Dorsolateral prefrontal cortex (tissue), 120 donors: ENCODE measurements at regions of chrX and their contacts with region 1.

Region 1: DNA sequence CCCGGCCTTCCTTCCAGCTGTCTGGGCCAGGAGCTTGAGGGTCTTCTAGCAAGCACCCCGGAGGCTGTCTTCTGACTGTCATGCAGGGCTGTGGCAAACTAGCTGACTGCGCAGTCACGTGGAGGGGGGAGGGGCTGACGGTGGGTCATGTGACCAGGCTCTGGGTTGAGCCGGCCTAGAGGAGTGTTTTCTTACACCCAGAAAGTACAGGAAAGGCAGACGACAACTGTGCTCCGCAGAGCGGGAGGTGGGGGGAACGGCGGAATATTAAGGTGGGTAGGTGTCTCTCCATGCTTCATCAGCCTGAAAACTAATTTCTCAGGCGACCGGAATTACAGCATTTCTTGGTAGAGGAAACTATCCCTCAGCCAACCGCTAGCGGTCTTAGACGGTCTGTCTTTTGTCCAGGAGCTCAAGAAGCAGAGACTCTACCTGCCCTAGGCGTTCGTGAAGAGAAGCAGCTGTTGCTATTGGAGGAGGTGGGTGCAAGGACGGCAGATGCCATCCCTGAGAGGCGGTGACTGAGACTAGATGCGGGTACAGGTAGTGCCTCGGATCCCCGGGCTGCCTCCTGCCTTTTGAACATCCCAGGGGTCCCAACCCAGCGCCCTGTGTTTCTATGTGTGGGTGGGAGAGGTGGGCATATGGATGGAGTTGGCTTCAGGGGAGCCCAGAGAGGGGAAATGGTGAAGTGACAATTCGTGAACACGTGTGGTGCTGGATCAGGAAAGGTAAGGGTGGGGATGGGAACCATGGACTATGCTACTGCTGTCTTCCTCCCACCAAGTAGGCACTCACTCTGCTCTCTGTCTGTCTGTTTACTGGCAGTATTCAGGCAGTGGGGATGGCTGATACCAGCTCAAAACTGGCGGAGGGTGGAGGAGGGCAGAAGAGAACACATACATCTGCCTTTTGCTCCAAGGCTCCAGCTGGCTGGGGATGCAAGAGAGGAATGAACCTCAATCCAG is 8.8 kb downstream of the GPRASP1 start:
- DNase-seq: peak; percentile 56 to 91 (median 86)
- H3K4me3 ChIP-seq: peak overlapping the region; percentile 22 to 74 (median 53)
- H3K27ac ChIP-seq: peak overlapping the region in 46 of 59 donors; percentile 2 to 85 (median 61)
- H3K27me3 ChIP-seq: peaks cover 0 to 33% (median 0%) of the 10 kb centered on the region in 45 donors
- CTCF ChIP-seq: peak in 12 of 56 donors; percentile 6 to 28 (median 19)

Region 2: GRCh38 chrX:102515975-102516941 is 143.8 kb before region 1 on chrX and contains the start of gene TMSB15A:
- intact Hi-C with region 1: loop called in 1 of 2 experiments (anchors 10 kb)
- DNase-seq: peak; percentile 46 to 67 (median 56)
- H3K4me3 ChIP-seq: peak within 1 kb of the TSS; percentile 32 to 71 (median 54)
- H3K27ac ChIP-seq: no peak within 1 kb of the TSS
- H3K27me3 ChIP-seq: peaks cover 0 to 92% (median 37%) of the 10 kb centered on the region in 45 donors
- CTCF ChIP-seq: no peak
- total RNA-seq, gene TMSB15A: 0.65 to 1.5 (median 0.84) TPM in 12 of 120 experiments, not detected in the others

Region 3: DNA sequence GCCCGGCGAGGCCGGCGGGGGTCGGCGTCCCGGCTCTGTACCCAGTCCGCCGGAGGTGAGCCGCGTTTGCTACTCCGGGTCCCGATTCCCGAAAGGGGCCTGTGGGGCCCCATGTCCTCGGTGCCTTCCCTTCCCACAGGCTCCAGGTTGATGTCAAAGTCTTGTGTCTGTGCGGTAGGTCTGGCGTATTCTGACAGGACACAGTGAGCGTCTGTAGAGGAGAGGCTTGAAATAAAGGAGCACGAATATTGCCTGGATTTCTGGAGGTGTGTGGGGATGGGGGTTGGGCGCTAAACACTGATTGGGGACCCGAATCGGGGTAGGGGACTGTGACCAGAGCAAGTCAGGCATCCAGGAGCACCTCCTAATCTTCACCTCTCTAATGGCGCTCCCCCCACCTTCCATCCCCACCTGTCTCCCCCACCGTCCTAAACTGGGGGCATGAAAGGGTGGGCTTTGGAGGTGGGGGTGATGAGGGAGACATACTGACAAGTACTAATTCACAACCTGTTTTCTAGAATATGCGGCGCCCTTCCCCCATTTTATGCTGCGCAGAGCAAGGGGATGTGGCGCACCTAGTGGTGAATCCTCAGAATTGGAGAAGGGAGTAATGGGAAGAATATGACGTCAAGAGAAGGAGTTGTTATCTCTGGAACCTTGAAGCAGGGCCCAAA is 53.0 kb after region 1 on chrX:
- intact Hi-C with region 1: loop called (anchors 2 to 10 kb)
- DNase-seq: peak in 8 of 10 donors; percentile 50 to 71 (median 64)
- H3K4me3 ChIP-seq: peak overlapping the region; percentile 38 to 81 (median 68)
- H3K27ac ChIP-seq: peak overlapping the region; percentile 6 to 96 (median 89)
- H3K27me3 ChIP-seq: peaks cover 0 to 72% (median 5%) of the 10 kb centered on the region in 45 donors
- CTCF ChIP-seq: peak; percentile 34 to 72 (median 55)